BJ (cell line): ENCODE measurements at regions of chr11 and their contacts with region 1.

Region 1: GRCh38 chr11:115159207-115159606 is 345.0 kb downstream of the CADM1 start:
- DNase-seq: no peak
- H3K4me3 ChIP-seq: no peak overlapping the region
- H3K27me3 ChIP-seq: no peaks in the 10 kb centered on the region
- CTCF ChIP-seq: no peak

Region 2: GRCh38 chr11:115170133-115170815 is 11.1 kb after region 1 on chr11:
- CTCF ChIA-PET with region 1: interaction called, 12 read pairs
- POLR2A ChIA-PET with region 1: no interaction called
- DNase-seq: no peak
- H3K4me3 ChIP-seq: no peak overlapping the region
- H3K27me3 ChIP-seq: no peaks in the 10 kb centered on the region
- CTCF ChIP-seq: peak; percentile 70